Activated CD4-positive, alpha-beta T cell treated with anti-CD3 and anti-CD28 coated beads for 36 hours (primary cell): ENCODE measurements at regions of chr16 and their contacts with region 1.

Region 1: DNA sequence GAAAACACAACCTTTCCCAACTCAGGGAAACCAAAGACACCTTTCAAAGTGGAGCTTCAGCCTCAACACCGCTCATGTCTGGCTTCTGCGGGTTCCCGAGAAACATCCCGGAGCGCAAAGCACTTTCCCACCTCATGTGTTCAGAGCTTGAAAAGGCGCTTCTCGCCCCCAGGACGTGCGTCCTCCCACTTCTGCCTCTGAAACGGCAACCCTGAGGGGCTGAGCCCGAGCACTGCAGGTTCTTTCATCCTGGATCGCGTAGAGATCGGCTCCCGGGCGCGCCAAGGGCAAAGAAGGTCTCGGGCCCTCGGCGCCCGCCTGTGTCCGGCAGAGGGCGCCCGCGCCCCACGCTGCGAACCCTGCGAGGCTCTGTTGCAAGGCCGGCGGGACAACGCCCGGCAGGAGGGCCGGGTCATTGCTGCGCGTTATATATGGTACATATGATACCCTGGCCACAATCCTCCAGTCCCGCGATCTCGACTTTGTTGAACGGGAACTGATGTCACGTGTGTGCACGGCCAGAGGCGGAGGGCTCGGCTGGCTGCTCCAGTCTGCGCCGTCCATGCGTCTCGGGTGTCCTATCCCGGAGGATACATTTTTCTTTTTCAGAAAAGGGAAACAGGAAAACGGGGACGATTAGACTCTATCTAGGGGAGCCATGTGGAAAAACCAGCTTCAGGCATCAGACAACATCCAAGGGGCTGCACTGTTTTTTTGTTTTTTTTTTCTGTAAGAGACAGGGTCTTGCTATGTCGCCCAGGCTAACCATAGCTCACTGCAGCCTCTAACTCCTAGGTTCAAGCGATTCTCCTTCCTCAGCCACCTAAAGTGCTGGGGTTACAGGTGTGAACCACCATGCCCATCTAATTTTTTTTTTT is 19.1 kb downstream of the COQ7 start:
- DNase-seq: peak; percentile 87
- ATAC-seq: peak; percentile 98
- H3K4me3 Mint-ChIP-seq: peak overlapping the region; percentile 35
- H3K27ac Mint-ChIP-seq: no peak overlapping the region
- H3K4me1 Mint-ChIP-seq: peaks cover 6% of the 10 kb centered on the region
- H3K27me3 Mint-ChIP-seq: peaks cover 6% of the 10 kb centered on the region

Region 2: GRCh38 chr16:18803569-18804462 is 282.7 kb before region 1 on chr16:
- CTCF ChIA-PET with region 1: no interaction called
- POLR2A ChIA-PET with region 1: no interaction called
- intact Hi-C with region 1: no loop called
- DNase-seq: no peak
- ATAC-seq: no peak
- H3K4me3 Mint-ChIP-seq: peak overlapping the region; percentile 7
- H3K27ac Mint-ChIP-seq: peak overlapping the region; percentile 85
- H3K4me1 Mint-ChIP-seq: peaks cover 44% of the 10 kb centered on the region
- H3K27me3 Mint-ChIP-seq: no peaks in the 10 kb centered on the region

Region 3: DNA sequence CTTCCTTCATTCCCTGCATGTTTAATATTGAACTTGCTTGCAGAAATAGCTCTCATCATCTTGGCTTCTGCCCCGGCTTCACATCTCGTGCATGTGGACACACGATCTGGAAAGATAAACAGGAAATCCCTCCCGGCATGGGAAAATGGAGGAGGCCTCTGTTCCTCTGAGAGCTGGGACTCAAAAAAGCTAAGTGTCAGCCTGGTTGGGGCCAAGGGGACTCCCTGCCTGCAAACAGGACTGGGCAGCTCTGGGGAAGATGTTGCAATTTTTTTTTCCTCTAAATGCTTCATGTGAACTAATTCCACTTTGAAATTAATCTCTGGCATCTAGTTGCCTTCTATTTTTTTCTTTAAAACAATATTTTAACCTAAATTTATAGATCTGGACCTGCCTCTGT is 52.0 kb after region 1 on chr16:
- CTCF ChIA-PET with region 1: interaction called, 3 read pairs
- POLR2A ChIA-PET with region 1: interaction called, 8 read pairs
- intact Hi-C with region 1: loop called in 1 of 2 experiments (anchors 5 kb)
- DNase-seq: no peak
- ATAC-seq: no peak
- H3K4me3 Mint-ChIP-seq: no peak overlapping the region
- H3K27ac Mint-ChIP-seq: no peak overlapping the region
- H3K4me1 Mint-ChIP-seq: no peaks in the 10 kb centered on the region
- H3K27me3 Mint-ChIP-seq: peaks cover 19% of the 10 kb centered on the region

Region 4: GRCh38 chr16:19179546-19180490 is 93.3 kb after region 1 on chr16:
- CTCF ChIA-PET with region 1: interaction called, 49 read pairs
- POLR2A ChIA-PET with region 1: no interaction called
- intact Hi-C with region 1: loop called (anchors 1 to 5 kb)
- DNase-seq: peak; percentile 72
- ATAC-seq: peak; percentile 63
- H3K4me3 Mint-ChIP-seq: no peak overlapping the region
- H3K27ac Mint-ChIP-seq: no peak overlapping the region
- H3K4me1 Mint-ChIP-seq: no peaks in the 10 kb centered on the region
- H3K27me3 Mint-ChIP-seq: peaks cover 10% of the 10 kb centered on the region

Region 5: GRCh38 chr16:19375561-19376158 is 289.1 kb after region 1 on chr16:
- CTCF ChIA-PET with region 1: interaction called, 10 read pairs
- POLR2A ChIA-PET with region 1: no interaction called
- intact Hi-C with region 1: loop called (anchors 1 kb)
- DNase-seq: peak; percentile 61
- ATAC-seq: no peak
- H3K4me3 Mint-ChIP-seq: no peak overlapping the region
- H3K27ac Mint-ChIP-seq: no peak overlapping the region
- H3K4me1 Mint-ChIP-seq: peaks cover 7% of the 10 kb centered on the region
- H3K27me3 Mint-ChIP-seq: no peaks in the 10 kb centered on the region

Region 6: DNA sequence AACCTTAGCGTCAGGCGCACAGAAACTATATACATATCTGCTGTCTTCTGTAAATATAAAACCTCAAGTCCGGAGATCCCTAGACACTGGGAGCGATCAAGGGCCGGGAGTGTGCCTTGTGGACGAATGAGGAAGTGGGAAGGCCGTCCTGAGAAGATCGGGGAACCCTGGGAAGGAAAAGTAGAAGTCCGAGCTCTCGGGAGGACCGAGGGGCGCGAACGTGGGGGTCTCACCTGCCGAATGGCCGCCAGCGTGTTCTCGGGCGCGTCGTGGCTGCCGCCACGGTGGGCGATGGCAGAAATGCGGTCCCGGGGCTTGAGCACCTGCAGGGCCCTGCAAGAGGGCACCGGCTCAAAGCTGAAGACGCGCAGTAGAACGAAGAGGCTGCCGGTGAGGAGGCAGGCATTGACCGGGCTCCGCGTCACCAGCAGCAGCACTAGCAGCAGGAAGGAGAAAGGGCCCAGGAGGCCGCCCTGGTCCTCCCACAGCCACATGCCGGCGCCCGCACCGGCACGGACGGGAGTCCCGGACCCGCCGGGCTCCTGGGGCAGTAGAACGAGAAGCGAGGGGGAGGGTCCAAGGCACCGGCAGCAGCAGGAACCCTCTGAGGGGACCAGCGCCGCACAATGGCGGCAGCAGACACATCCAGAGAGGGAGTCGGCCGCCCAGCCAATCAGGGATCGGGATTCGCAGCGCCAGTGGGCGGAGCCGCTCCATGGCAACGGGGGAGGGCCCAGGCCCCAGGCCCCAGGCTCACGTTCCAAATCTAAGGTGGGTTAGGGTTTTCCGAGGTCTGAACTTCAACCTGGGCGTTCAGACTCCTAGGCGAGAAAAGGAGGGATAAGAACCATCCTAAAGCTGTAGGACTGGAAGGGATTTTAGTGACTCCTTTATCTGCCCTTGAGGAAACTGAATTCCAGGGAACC is 435.2 kb after region 1 on chr16 and contains the start of gene GDE1:
- CTCF ChIA-PET with region 1: no interaction called
- POLR2A ChIA-PET with region 1: no interaction called
- intact Hi-C with region 1: loop called in 1 of 2 experiments (anchors 5 kb)
- DNase-seq: peak; percentile 97
- ATAC-seq: peak; percentile 83
- H3K4me3 Mint-ChIP-seq: peak within 1 kb of the TSS; percentile 94
- H3K27ac Mint-ChIP-seq: peak within 1 kb of the TSS; percentile 90
- H3K4me1 Mint-ChIP-seq: peaks cover 45% of the 10 kb centered on the region
- H3K27me3 Mint-ChIP-seq: no peaks in the 10 kb centered on the region
- total RNA-seq, gene GDE1: 13.8 to 18.1 TPM